Naive thymus-derived CD4-positive, alpha-beta T cell (primary cell): ENCODE measurements at regions of chr11 and their contacts with region 1.

Region 1: GRCh38 chr11:35082321-35083182 is 56.4 kb upstream of the CD44 start:
- DNase-seq: peak; percentile 76 to 94 (median 92)
- ATAC-seq: peak; percentile 86
- H3K4me3 ChIP-seq: peak overlapping the region; percentile 55
- H3K4me3 Mint-ChIP-seq: peak overlapping the region; percentile 78 to 89 (median 86)
- H3K27ac ChIP-seq: peak overlapping the region; percentile 95
- H3K27ac Mint-ChIP-seq: peak overlapping the region; percentile 89 to 100 (median 99)
- H3K4me1 ChIP-seq: peaks cover 64 to 78% of the 10 kb centered on the region in 2 donors
- H3K4me1 Mint-ChIP-seq: peaks cover 61 to 100% (median 95%) of the 10 kb centered on the region in 7 donors
- H3K27me3 ChIP-seq: no peaks in the 10 kb centered on the region
- H3K27me3 Mint-ChIP-seq: no peaks in the 10 kb centered on the region

Region 2: GRCh38 chr11:35013514-35014233 is 68.9 kb before region 1 on chr11:
- CTCF ChIA-PET with region 1: interaction called, 4 read pairs
- POLR2A ChIA-PET with region 1: interaction called, 8 read pairs
- intact Hi-C with region 1: loop called in 1 of 2 experiments (anchors 1 kb)
- DNase-seq: peak in 8 of 9 donors; percentile 8 to 68 (median 40)
- ATAC-seq: peak; percentile 79
- H3K4me3 ChIP-seq: no peak overlapping the region
- H3K4me3 Mint-ChIP-seq: peak overlapping the region; percentile 12 to 80 (median 49)
- H3K27ac ChIP-seq: peak overlapping the region; percentile 49
- H3K27ac Mint-ChIP-seq: peak overlapping the region; percentile 66 to 95 (median 84)
- H3K4me1 ChIP-seq: peaks cover 18 to 25% of the 10 kb centered on the region in 2 donors
- H3K4me1 Mint-ChIP-seq: peaks cover 19 to 40% (median 27%) of the 10 kb centered on the region in 7 donors
- H3K27me3 ChIP-seq: no peaks in the 10 kb centered on the region
- H3K27me3 Mint-ChIP-seq: peaks cover 0 to 40% (median 0%) of the 10 kb centered on the region in 5 donors

Region 3: DNA sequence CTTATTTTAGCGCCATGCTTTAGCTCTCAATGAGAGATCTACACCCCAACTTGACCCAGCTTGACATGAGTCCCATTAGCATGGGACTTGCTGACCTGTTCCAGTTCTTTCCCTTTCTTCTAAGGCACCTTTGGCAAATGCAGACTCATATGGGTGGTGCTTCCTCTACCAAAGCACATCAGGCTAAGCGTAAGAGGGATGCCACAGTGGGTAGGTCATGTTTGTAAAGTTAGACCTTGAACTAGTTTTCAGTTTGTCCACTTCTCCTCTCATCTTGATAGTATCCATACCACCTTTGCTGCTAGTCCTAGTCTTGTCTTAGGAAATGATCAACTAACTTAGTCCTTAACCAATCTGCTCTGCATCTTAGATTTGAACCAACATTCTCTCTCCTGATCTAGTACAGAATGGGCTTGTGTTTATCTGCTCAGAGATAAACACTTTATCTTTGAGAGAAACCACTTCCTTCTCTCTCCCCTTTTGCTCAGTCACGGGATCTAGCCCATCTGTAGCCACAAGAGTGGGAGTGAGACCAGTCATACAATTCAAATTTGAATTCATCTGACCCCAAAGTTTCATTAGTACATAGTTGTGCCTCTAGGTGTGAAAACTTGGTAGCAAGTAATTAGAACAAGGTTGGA is 15.6 kb before region 1 on chr11:
- CTCF ChIA-PET with region 1: interaction called, 4 read pairs
- POLR2A ChIA-PET with region 1: interaction called, 10 read pairs
- intact Hi-C with region 1: loop called in 1 of 2 experiments (anchors 1 kb)
- DNase-seq: peak in 1 of 9 donors; percentile 44
- ATAC-seq: peak; percentile 86
- H3K4me3 ChIP-seq: no peak overlapping the region
- H3K4me3 Mint-ChIP-seq: peak overlapping the region; percentile 1 to 69 (median 46)
- H3K27ac ChIP-seq: no peak overlapping the region
- H3K27ac Mint-ChIP-seq: peak overlapping the region; percentile 34 to 80 (median 60)
- H3K4me1 ChIP-seq: peaks cover 19 to 34% of the 10 kb centered on the region in 2 donors
- H3K4me1 Mint-ChIP-seq: peaks cover 16 to 54% (median 37%) of the 10 kb centered on the region in 7 donors
- H3K27me3 ChIP-seq: no peaks in the 10 kb centered on the region
- H3K27me3 Mint-ChIP-seq: peaks cover 0 to 7% (median 0%) of the 10 kb centered on the region in 5 donors

Region 4: DNA sequence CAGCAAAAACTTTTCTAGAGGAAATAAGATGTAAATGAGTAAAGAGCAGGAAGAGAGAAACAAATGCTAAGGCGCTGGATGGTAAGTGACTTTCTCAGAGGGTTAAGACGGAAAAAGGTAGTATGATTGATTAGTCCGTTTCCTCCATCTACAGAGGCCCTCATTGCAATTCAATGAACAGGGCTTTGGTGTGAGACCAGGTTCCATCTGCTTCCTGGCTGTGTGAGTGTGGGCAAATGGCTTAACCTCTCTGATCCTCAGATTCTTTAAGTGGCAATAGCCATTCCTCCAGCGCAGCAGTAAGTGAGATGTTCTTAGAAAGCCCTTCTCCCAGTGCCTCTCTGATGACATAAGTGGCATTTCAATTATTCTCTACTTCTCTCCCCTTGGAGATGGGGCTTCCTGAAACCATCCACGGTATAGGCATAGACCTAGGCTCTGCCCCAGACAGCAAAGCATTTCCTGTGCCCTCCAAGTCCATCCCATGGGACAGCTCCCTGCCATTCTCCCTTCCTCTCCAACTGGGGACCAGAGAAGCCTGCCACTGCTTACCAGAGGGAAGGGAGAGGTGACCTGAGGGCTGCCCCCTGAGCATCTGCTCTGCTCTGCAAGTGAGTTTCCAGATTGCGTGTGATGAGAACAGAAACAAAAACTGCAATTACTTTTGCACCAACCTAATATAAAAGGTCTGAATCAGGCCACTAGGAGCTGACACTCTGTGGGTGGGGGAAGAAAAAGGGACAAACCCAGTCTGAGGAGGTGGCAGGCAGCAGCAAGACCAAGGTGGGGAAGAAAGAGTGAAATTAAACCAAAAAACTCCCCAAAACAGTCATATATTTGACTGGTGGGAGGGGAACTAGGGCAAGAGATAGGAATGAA is 43.7 kb after region 1 on chr11:
- CTCF ChIA-PET with region 1: no interaction called
- POLR2A ChIA-PET with region 1: interaction called, 6 read pairs
- intact Hi-C with region 1: loop called in 1 of 2 experiments (anchors 5 kb)
- DNase-seq: peak in 2 of 9 donors; percentile 27 to 62
- ATAC-seq: peak; percentile 59
- H3K4me3 ChIP-seq: peak overlapping the region; percentile 17
- H3K4me3 Mint-ChIP-seq: peak overlapping the region; percentile 42 to 69 (median 60)
- H3K27ac ChIP-seq: peak overlapping the region; percentile 12
- H3K27ac Mint-ChIP-seq: peak overlapping the region; percentile 44 to 92 (median 82)
- H3K4me1 ChIP-seq: peaks cover 33 to 49% of the 10 kb centered on the region in 2 donors
- H3K4me1 Mint-ChIP-seq: peaks cover 32 to 69% (median 64%) of the 10 kb centered on the region in 7 donors
- H3K27me3 ChIP-seq: no peaks in the 10 kb centered on the region
- H3K27me3 Mint-ChIP-seq: peaks cover 0 to 8% (median 0%) of the 10 kb centered on the region in 5 donors

Region 5: DNA sequence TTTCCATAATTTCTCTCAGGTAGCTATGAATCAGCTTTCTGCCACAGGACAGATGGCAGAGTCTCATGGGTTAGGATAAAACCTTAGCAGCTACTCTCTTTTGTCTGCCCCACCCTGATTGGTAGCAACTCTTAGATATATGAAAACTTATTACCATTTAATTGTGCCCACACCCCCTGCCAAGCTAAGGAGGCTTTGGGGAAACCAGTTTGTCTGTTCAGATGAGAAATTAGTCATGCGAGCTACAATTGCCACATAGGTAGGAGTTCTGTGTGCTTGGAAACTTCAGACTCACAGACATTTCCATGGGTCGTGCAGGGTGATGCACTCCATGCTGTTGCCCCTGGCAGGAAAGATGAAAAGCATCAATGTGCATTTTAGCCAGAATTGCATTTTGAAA is 96.3 kb after region 1 on chr11:
- CTCF ChIA-PET with region 1: interaction called, 3 read pairs
- POLR2A ChIA-PET with region 1: interaction called, 3 read pairs
- intact Hi-C with region 1: loop called in 1 of 2 experiments (anchors 1 kb)
- DNase-seq: no peak
- ATAC-seq: no peak
- H3K4me3 ChIP-seq: no peak overlapping the region
- H3K4me3 Mint-ChIP-seq: peak overlapping the region in 9 of 10 donors; percentile 44 to 77 (median 59)
- H3K27ac ChIP-seq: peak overlapping the region; percentile 65
- H3K27ac Mint-ChIP-seq: peak overlapping the region; percentile 85 to 100 (median 94)
- H3K4me1 ChIP-seq: peaks cover 84 to 89% of the 10 kb centered on the region in 2 donors
- H3K4me1 Mint-ChIP-seq: peaks cover 62 to 93% (median 91%) of the 10 kb centered on the region in 7 donors
- H3K27me3 ChIP-seq: no peaks in the 10 kb centered on the region
- H3K27me3 Mint-ChIP-seq: no peaks in the 10 kb centered on the region

Region 6: GRCh38 chr11:35214792-35215193 is 132.2 kb after region 1 on chr11:
- CTCF ChIA-PET with region 1: no interaction called
- POLR2A ChIA-PET with region 1: no interaction called
- intact Hi-C with region 1: no loop called
- DNase-seq: no peak
- ATAC-seq: peak; percentile 71
- H3K4me3 ChIP-seq: no peak overlapping the region
- H3K4me3 Mint-ChIP-seq: peak overlapping the region in 7 of 10 donors; percentile 12 to 68 (median 44)
- H3K27ac ChIP-seq: peak overlapping the region; percentile 11
- H3K27ac Mint-ChIP-seq: peak overlapping the region; percentile 26 to 98 (median 92)
- H3K4me1 ChIP-seq: peaks cover 40 to 41% of the 10 kb centered on the region in 2 donors
- H3K4me1 Mint-ChIP-seq: peaks cover 41 to 97% (median 89%) of the 10 kb centered on the region in 7 donors
- H3K27me3 ChIP-seq: no peaks in the 10 kb centered on the region
- H3K27me3 Mint-ChIP-seq: no peaks in the 10 kb centered on the region